ENCODE measurements at regions of chr1 and their contacts with region 1.

Region 1: GRCh38 chr1:9196129-9197040 is 38.2 kb upstream of the H6PD start:
- DNase-seq: peak; percentile 75
- ATAC-seq: peak; percentile 52
- H3K4me3 ChIP-seq: peak overlapping the region; percentile 44; the same call in 1 of the 2 replicates
- H3K27ac ChIP-seq: no peak overlapping the region
- H3K4me1 ChIP-seq: peaks cover 32% of the 10 kb centered on the region
- H3K27me3 ChIP-seq: 0 out of 2 replicates have a peak, but pooled peaks cover 5% of the 10 kb centered on the region
- CTCF ChIP-seq: peak; percentile 90

Region 2: DNA sequence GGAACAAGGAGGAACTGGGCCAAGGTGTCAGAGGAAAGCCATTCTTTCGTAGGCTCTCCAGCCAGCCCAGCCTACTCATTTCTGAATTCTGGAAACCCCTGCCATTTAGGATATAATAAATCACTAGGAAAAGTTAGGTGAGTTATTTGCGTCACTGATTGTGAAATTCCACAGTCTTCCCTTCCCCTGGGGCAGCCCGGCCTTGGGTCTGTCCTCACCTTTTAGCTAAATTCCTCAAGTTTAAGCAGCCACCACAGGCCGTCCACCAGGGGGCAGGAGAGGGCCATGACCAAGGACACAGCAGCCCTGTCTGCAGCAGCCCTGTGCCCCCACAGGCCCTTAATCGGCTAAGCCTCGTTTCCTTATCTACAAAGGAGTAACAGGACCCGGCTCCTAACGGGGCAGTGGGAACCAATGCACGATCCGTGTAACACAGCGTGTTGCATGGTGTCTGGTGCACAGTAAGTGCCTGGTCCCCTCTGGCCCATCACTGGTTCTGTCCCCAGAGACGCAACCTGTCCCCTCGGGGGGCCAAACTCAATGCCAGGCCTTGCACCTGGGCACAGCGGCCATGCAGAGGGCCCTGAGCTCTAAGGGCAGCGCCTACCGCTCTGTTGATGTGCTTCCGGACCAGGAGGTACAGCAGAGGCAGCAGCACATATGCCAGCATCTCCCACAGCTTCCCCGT is 85.6 kb before region 1 on chr1:
- CTCF ChIA-PET with region 1: interaction called, 9 read pairs
- POLR2A ChIA-PET with region 1: no interaction called
- intact Hi-C with region 1: loop called (anchors 1 kb)
- DNase-seq: peak; percentile 91
- ATAC-seq: peak; percentile 80
- H3K4me3 ChIP-seq: no peak overlapping the region
- H3K27ac ChIP-seq: peak overlapping the region; percentile 95
- H3K4me1 ChIP-seq: peaks cover 26% of the 10 kb centered on the region
- H3K27me3 ChIP-seq: no peaks in the 10 kb centered on the region
- CTCF ChIP-seq: peak; percentile 94

Region 3: GRCh38 chr1:9145021-9145668 is 51.2 kb before region 1 on chr1:
- CTCF ChIA-PET with region 1: interaction called, 18 read pairs
- POLR2A ChIA-PET with region 1: no interaction called
- intact Hi-C with region 1: loop called (anchors 1 kb)
- DNase-seq: peak; percentile 49
- ATAC-seq: peak; percentile 53; the same call in 1 of the 2 replicates
- H3K4me3 ChIP-seq: no peak overlapping the region
- H3K27ac ChIP-seq: no peak overlapping the region
- H3K4me1 ChIP-seq: 0 out of 2 replicates have a peak, but pooled peaks cover 5% of the 10 kb centered on the region
- H3K27me3 ChIP-seq: no peaks in the 10 kb centered on the region
- CTCF ChIP-seq: no peak

Measured in PC-3 (cell line).